Activated naive CD4-positive, alpha-beta T cell treated with anti-CD3 and anti-CD28 coated beads for 36 hours (primary cell): ENCODE measurements at regions of chr10 and their contacts with region 1.

Region 1: DNA sequence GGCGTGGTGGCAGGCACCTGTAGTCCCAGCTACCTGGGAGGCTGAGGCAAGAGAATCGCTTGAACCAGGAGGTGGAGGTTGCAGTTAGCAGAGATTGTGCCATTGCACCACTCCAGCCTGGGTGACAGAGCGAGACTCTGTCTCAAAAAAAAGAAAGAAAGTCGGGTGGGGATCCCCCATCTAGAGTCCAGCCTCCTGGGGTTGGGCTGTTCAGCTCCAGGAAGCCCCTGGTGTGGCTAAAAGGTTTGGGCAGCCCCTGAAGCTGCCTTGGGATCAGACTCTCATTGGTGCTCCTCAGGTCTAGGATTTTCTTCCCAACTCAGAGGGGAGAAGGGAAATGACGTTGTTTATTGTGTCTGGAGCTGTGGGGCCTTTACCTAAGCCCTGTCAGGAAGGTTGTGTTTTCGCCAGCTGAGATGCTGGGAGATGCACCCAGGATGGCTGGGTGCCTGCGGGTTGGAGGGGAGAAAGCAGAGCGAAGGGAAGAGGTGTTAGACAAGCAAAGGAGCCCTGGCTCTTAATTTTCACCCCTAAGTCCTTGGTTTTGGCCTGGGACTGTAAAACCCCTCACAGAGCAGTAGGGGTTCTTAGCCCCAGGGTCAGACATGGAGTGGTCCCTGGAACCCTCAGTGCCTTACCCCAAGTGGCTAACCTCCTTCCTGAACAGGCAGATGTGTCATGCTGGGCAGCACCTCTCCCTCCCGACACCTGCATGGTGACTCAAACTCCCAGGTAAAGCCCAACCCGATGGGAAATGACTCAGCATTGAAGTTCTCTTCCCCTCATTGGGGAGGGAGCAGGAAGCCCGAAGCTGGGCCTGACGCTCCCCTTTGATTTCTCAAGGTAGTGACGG is 21.1 kb downstream of the PLAU start:
- DNase-seq: peak; percentile 92
- H3K4me3 Mint-ChIP-seq: no peak overlapping the region
- H3K27ac Mint-ChIP-seq: peak overlapping the region; percentile 83
- H3K4me1 Mint-ChIP-seq: peaks cover 15% of the 10 kb centered on the region
- H3K27me3 Mint-ChIP-seq: peaks cover 7% of the 10 kb centered on the region

Region 2: GRCh38 chr10:73857446-73857845 is 74.5 kb before region 1 on chr10:
- CTCF ChIA-PET with region 1: no interaction called
- intact Hi-C with region 1: loop called (anchors 1 kb)
- DNase-seq: peak; percentile 77
- H3K4me3 Mint-ChIP-seq: no peak overlapping the region
- H3K27ac Mint-ChIP-seq: peak overlapping the region; percentile 73
- H3K4me1 Mint-ChIP-seq: peaks cover 47% of the 10 kb centered on the region
- H3K27me3 Mint-ChIP-seq: no peaks in the 10 kb centered on the region

Region 3: DNA sequence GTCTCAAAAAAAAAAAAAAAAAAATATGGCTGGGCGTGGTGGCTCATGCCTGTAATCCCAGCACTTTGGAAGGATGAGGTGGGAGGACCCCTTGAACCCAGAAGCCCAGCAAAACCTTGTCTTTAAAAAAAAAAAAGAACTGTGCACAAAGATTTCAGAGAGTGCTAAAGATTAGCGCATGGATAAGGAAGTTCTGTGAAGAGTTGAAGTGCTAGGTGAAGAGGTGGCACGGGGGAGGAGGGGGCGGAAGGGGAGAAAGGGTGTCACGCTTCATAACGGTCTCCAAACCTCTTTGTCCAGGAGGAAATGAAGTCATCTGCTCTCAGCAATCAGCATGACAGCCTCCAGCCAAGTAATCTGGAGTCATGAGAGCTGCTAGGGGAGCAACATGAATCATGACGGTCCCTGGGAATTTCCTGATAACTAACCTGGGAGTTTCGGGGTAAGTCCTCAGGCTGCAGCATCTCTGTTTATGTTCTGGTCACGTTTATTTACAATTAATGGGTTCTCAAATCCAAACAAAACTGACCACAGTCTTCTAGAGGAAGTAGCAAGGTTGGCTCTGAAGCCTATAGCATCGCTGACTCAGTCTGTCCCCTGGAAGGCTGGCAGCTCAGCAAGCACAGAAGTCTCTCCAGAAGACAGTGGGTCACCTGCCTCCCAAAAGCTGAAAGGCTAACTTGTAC is 23.0 kb before region 1 on chr10:
- CTCF ChIA-PET with region 1: no interaction called
- intact Hi-C with region 1: loop called (anchors 1 kb)
- DNase-seq: peak; percentile 86
- H3K4me3 Mint-ChIP-seq: peak overlapping the region; percentile 20
- H3K27ac Mint-ChIP-seq: peak overlapping the region; percentile 7
- H3K4me1 Mint-ChIP-seq: peaks cover 34% of the 10 kb centered on the region
- H3K27me3 Mint-ChIP-seq: peaks cover 38% of the 10 kb centered on the region

Region 4: GRCh38 chr10:73959484-73960243 is 27.7 kb after region 1 on chr10:
- CTCF ChIA-PET with region 1: no interaction called
- intact Hi-C with region 1: no loop called
- DNase-seq: no peak
- H3K4me3 Mint-ChIP-seq: no peak overlapping the region
- H3K27ac Mint-ChIP-seq: no peak overlapping the region
- H3K4me1 Mint-ChIP-seq: peaks cover 37% of the 10 kb centered on the region
- H3K27me3 Mint-ChIP-seq: no peaks in the 10 kb centered on the region